ENCODE measurements at regions of chr14 and their contacts with region 1.

Region 1: GRCh38 chr14:64170181-64170580 is 124.0 kb downstream of the ESR2 start:
- DNase-seq: peak in 1 of 35 experiments; percentile 1
- ATAC-seq: no peak
- H3K4me3 ChIP-seq: no peak overlapping the region
- H3K4me3 Mint-ChIP-seq: no peak overlapping the region
- H3K27ac ChIP-seq: no peak overlapping the region
- H3K27ac Mint-ChIP-seq: no peak overlapping the region
- H3K4me1 ChIP-seq: no peaks in the 10 kb centered on the region
- H3K4me1 Mint-ChIP-seq: no peaks in the 10 kb centered on the region
- H3K27me3 ChIP-seq: no peaks in the 10 kb centered on the region
- H3K27me3 Mint-ChIP-seq: no peaks in the 10 kb centered on the region

Region 2: GRCh38 chr14:64089920-64090319 is 80.3 kb before region 1 on chr14:
- CTCF ChIA-PET with region 1: interaction called in 1 of 2 experiments, 10 read pairs
- POLR2A ChIA-PET with region 1: no interaction called
- DNase-seq: no peak
- ATAC-seq: no peak
- H3K4me3 ChIP-seq: no peak overlapping the region
- H3K4me3 Mint-ChIP-seq: no peak overlapping the region
- H3K27ac ChIP-seq: no peak overlapping the region
- H3K27ac Mint-ChIP-seq: no peak overlapping the region
- H3K4me1 ChIP-seq: no peaks in the 10 kb centered on the region
- H3K4me1 Mint-ChIP-seq: no peaks in the 10 kb centered on the region
- H3K27me3 ChIP-seq: no peaks in the 10 kb centered on the region
- H3K27me3 Mint-ChIP-seq: no peaks in the 10 kb centered on the region

Region 3: DNA sequence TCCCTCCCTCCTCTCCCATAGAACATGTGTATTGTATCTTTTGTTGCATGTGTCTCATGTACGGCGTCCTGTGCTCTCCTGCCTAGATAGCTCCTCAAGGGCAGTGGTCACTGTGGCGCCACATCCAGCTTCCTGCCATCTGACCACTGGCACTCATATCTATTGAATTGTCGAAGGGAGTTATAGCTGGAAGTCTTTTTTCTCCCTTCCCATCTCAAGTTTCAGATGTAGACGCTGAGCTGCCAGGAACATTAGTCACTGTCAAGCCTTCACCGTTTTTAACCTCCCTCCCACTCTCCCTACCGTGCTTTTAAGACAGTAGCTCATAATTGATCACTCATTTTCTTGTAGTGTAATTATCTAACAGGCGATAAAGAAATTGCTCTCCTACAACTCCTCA is 251.0 kb after region 1 on chr14:
- CTCF ChIA-PET with region 1: no interaction called
- POLR2A ChIA-PET with region 1: no interaction called
- DNase-seq: no peak
- ATAC-seq: no peak
- H3K4me3 ChIP-seq: no peak overlapping the region
- H3K4me3 Mint-ChIP-seq: no peak overlapping the region
- H3K27ac ChIP-seq: no peak overlapping the region
- H3K27ac Mint-ChIP-seq: no peak overlapping the region
- H3K4me1 ChIP-seq: no peaks in the 10 kb centered on the region
- H3K4me1 Mint-ChIP-seq: no peaks in the 10 kb centered on the region
- H3K27me3 ChIP-seq: no peaks in the 10 kb centered on the region
- H3K27me3 Mint-ChIP-seq: no peaks in the 10 kb centered on the region

Region 4: GRCh38 chr14:64645220-64645892 is 475.2 kb after region 1 on chr14:
- CTCF ChIA-PET with region 1: no interaction called
- POLR2A ChIA-PET with region 1: no interaction called
- DNase-seq: no peak
- ATAC-seq: no peak
- H3K4me3 ChIP-seq: no peak overlapping the region
- H3K4me3 Mint-ChIP-seq: no peak overlapping the region
- H3K27ac ChIP-seq: no peak overlapping the region
- H3K27ac Mint-ChIP-seq: no peak overlapping the region
- H3K4me1 ChIP-seq: no peaks in the 10 kb centered on the region
- H3K4me1 Mint-ChIP-seq: no peaks in the 10 kb centered on the region
- H3K27me3 ChIP-seq: peaks cover 0 to 10% of the 10 kb centered on the region in 2 experiments
- H3K27me3 Mint-ChIP-seq: peaks cover 15 to 21% of the 10 kb centered on the region in 2 donors